Transverse colon (tissue), 4 donors: ENCODE measurements at regions of chr22 and their contacts with region 1.

Region 1: GRCh38 chr22:31983911-31984656 is 39.7 kb downstream of the YWHAH start:
- DNase-seq: no peak
- H3K4me3 ChIP-seq: no peak overlapping the region
- H3K27ac ChIP-seq: no peak overlapping the region
- H3K4me1 ChIP-seq: no peaks in the 10 kb centered on the region
- H3K27me3 ChIP-seq: no peaks in the 10 kb centered on the region
- CTCF ChIP-seq: no peak
- EP300 ChIP-seq: no peak
- POLR2A ChIP-seq: no peak

Region 2: DNA sequence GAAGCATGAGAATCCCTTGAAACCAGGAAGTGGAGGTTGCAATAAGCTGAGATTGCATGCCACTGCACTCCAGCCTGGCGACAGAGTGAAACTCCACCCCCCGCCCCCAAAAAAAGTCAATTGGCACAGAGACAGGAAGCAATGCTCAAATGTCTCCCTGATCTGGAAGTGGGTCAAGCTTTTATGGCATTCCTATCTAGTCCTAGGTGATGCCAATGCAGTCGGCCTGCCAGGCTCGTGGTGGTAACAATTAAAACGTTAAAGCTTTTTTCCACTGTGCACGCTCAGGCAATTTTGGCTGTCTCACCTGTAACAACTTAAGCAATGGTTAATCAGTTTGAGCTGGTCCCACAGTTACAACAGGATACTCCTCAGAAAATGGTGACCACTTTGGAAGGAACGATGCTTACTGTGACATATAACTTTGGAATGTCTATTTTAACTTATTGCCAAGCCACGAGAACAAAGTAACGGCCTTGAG is 303.2 kb before region 1 on chr22:
- in situ Hi-C with region 1: no loop called
- intact Hi-C with region 1: no loop called
- DNase-seq: peak; percentile 38
- H3K4me3 ChIP-seq: no peak overlapping the region
- H3K27ac ChIP-seq: peak overlapping the region; percentile 19 to 77 (median 62)
- H3K4me1 ChIP-seq: peaks cover 5 to 16% (median 10%) of the 10 kb centered on the region in 4 donors
- H3K27me3 ChIP-seq: no peaks in the 10 kb centered on the region
- CTCF ChIP-seq: no peak
- EP300 ChIP-seq: no peak
- POLR2A ChIP-seq: no peak

Region 3: GRCh38 chr22:32005453-32005852 is 21.4 kb after region 1 on chr22:
- in situ Hi-C with region 1: no loop called
- intact Hi-C with region 1: no loop called
- DNase-seq: no peak
- H3K4me3 ChIP-seq: no peak overlapping the region
- H3K27ac ChIP-seq: no peak overlapping the region
- H3K4me1 ChIP-seq: no peaks in the 10 kb centered on the region
- H3K27me3 ChIP-seq: no peaks in the 10 kb centered on the region
- CTCF ChIP-seq: no peak
- EP300 ChIP-seq: no peak
- POLR2A ChIP-seq: no peak

Region 4: DNA sequence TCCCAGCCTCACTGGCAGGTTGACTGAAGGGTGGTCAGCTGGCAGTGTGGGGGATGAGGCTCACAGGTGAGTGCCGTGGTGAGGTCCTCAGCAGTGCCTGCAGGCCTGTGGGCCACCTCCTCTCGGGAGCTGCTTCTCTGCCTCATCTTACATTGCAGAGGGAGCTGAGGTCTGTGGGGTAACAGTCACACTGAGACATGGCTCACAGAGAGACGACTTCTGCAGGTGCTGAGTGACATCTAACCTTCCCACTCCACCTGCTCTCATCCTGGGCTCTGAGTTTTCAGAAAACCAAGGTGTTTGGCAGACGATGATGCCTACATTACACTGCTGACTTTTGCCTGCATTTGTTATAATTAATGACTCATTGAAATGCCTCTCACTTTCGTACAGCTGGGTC is 50.2 kb after region 1 on chr22:
- in situ Hi-C with region 1: no loop called
- intact Hi-C with region 1: loop called (anchors 2 kb)
- DNase-seq: no peak
- H3K4me3 ChIP-seq: no peak overlapping the region
- H3K27ac ChIP-seq: no peak overlapping the region
- H3K4me1 ChIP-seq: no peaks in the 10 kb centered on the region
- H3K27me3 ChIP-seq: no peaks in the 10 kb centered on the region
- CTCF ChIP-seq: no peak
- EP300 ChIP-seq: no peak
- POLR2A ChIP-seq: no peak

Region 5: GRCh38 chr22:32080904-32081303 is 96.8 kb after region 1 on chr22:
- in situ Hi-C with region 1: loop called (anchors 5 to 25 kb)
- intact Hi-C with region 1: no loop called
- DNase-seq: peak; percentile 39
- H3K4me3 ChIP-seq: no peak overlapping the region
- H3K27ac ChIP-seq: no peak overlapping the region
- H3K4me1 ChIP-seq: peaks cover 0 to 33% (median 6%) of the 10 kb centered on the region in 4 donors
- H3K27me3 ChIP-seq: no peaks in the 10 kb centered on the region
- CTCF ChIP-seq: peak; percentile 47 to 82 (median 64)
- EP300 ChIP-seq: no peak
- POLR2A ChIP-seq: no peak

Region 6: DNA sequence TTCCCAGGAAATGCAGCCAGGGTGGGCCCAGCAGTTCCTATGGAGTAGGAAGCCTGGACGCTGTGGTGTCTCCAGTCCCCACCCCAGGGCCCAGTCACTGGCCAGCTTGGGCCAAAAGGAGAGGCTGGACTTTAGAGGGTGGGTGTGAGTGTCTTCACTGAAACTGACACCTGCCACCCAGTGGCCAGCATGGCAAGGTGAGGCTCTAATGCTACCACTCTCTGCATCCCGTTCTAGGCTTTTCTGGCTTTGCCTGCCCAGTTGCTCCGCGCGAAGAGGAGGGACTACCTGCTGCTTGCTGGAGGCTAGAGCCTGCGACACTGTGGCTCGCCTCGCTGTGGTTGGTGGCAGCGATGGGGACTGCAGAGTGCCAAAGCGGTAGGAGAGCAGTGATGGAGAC is 139.6 kb after region 1 on chr22:
- in situ Hi-C with region 1: no loop called
- intact Hi-C with region 1: no loop called
- DNase-seq: no peak
- H3K4me3 ChIP-seq: no peak overlapping the region
- H3K27ac ChIP-seq: no peak overlapping the region
- H3K4me1 ChIP-seq: no peaks in the 10 kb centered on the region
- H3K27me3 ChIP-seq: no peaks in the 10 kb centered on the region
- CTCF ChIP-seq: peak in 1 of 5 experiments; percentile 10
- EP300 ChIP-seq: no peak
- POLR2A ChIP-seq: no peak